Transverse colon (tissue), 4 donors: ENCODE measurements at regions of chr6 and their contacts with region 1.

Region 1: DNA sequence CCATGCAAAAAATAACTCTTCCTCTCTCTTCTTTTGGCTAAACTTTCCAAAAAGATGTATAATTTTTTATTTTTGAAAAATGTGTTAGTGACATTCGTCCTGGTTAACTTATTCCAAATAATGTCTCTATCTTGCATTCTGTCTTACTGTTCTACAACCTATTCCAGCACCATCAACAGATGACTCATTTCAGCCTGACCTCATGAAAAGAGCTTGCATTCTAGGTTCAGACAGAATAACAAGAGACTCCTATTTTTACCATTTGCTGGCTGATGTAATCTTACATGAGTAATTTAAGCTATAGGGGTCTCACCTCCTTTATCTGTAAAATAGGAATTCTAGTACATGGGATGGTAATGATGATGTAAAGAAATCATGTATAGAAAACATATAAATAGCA is 109.0 kb downstream of the FUT9 start:
- DNase-seq: no peak
- H3K4me3 ChIP-seq: no peak overlapping the region
- H3K27ac ChIP-seq: no peak overlapping the region
- H3K4me1 ChIP-seq: no peaks in the 10 kb centered on the region
- H3K27me3 ChIP-seq: no peaks in the 10 kb centered on the region
- CTCF ChIP-seq: no peak
- EP300 ChIP-seq: no peak
- POLR2A ChIP-seq: no peak

Region 2: GRCh38 chr6:94535794-94536193 is 1589.0 kb before region 1 on chr6:
- in situ Hi-C with region 1: no loop called
- intact Hi-C with region 1: loop called (anchors 5 kb)
- DNase-seq: no peak
- H3K4me3 ChIP-seq: no peak overlapping the region
- H3K27ac ChIP-seq: no peak overlapping the region
- H3K4me1 ChIP-seq: no peaks in the 10 kb centered on the region
- H3K27me3 ChIP-seq: no peaks in the 10 kb centered on the region
- CTCF ChIP-seq: no peak
- EP300 ChIP-seq: no peak
- POLR2A ChIP-seq: no peak

Region 3: DNA sequence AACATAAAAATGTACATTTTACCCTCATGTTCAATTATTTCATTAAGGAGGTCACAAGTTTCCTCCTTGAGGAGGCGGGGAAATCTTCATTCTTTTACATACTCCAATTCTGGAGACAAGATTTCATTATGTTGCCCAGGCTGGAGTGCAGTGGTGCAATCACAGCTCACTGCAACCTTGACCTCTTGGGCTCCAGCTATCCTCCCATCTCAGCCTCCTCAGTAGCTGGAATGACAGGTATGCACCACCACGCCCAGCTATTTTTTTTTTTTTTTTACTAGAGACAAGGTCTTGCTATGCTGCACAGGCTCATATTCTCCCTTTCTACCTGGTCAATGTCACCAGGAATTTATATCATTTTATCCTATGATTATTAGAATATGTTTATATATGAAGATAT is 23.2 kb before region 1 on chr6:
- in situ Hi-C with region 1: no loop called
- intact Hi-C with region 1: loop called (anchors 1 kb)
- DNase-seq: no peak
- H3K4me3 ChIP-seq: no peak overlapping the region
- H3K27ac ChIP-seq: no peak overlapping the region
- H3K4me1 ChIP-seq: no peaks in the 10 kb centered on the region
- H3K27me3 ChIP-seq: no peaks in the 10 kb centered on the region
- CTCF ChIP-seq: no peak
- EP300 ChIP-seq: no peak
- POLR2A ChIP-seq: no peak